ENCODE measurements at regions of chr14 and their contacts with region 1.

Region 1: DNA sequence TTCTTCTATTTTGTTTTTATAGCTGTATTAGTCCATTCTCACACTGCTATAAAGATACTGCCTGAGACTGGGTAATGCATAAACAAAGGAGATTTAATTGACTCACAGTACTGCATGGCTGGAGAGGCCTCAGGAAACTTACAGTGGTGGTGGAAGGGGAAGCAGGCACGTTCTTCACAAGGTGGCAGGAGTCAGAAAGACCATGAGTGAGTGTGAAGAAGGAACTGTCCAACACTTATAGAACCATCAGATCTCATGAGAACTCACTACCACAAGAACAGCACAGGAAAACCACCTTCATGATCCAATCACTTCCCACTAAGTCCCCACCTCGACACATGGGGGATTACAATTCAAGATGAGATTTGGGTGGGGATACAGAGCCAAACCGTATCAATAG is 42.3 kb downstream of the ARMH4 start:
- DNase-seq: no peak
- H3K4me3 ChIP-seq: no peak overlapping the region
- H3K27ac ChIP-seq: no peak overlapping the region
- H3K4me1 ChIP-seq: no peaks in the 10 kb centered on the region
- H3K27me3 ChIP-seq: no peaks in the 10 kb centered on the region
- CTCF ChIP-seq: no peak
- POLR2A ChIP-seq: no peak

Region 2: GRCh38 chr14:58166005-58166983 is 56.5 kb after region 1 on chr14:
- intact Hi-C with region 1: loop called (anchors 5 kb)
- DNase-seq: peak; percentile 89 to 91
- H3K4me3 ChIP-seq: no peak overlapping the region
- H3K27ac ChIP-seq: no peak overlapping the region
- H3K4me1 ChIP-seq: peaks cover 0 to 6% of the 10 kb centered on the region in 2 donors
- H3K27me3 ChIP-seq: no peaks in the 10 kb centered on the region
- CTCF ChIP-seq: peak; percentile 64 to 88 (median 70)
- POLR2A ChIP-seq: no peak